ENCODE measurements at regions of chr4 and their contacts with region 1.

Region 1: DNA sequence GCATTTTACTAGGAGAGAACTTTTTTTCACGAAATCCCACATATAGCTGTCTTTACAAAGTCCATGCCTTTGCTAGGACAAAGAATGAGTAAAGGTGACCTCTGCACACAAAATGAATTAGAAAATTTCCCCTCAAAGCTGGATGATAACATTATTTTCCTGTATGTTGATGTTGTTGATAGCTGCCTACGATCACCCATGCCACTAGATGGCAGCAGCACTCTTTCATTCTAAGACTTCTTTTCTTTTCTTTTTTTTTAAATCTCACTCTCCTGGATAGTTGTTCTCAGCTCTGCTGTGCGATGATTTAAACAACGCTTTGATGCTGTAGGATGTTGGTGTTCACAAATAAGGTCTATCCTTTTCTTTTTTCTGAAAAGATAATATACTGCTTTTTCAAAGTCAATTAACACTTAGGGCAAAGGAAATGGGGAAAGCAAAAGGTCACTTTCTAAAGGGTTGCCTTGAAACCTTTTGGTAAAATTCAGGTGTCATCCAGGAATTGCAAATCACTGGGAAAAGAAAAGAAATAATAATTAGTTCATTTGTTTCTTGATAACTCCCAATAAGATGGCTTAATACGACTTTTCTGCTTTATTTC is 266.8 kb downstream of the C4orf33 start:
- DNase-seq: peak in 1 of 2 experiments; percentile 44
- H3K4me3 ChIP-seq: no peak overlapping the region
- H3K27ac ChIP-seq: no peak overlapping the region
- H3K4me1 ChIP-seq: peaks cover 14% of the 10 kb centered on the region
- H3K27me3 ChIP-seq: no peaks in the 10 kb centered on the region
- CTCF ChIP-seq: peak; percentile 80

Region 2: DNA sequence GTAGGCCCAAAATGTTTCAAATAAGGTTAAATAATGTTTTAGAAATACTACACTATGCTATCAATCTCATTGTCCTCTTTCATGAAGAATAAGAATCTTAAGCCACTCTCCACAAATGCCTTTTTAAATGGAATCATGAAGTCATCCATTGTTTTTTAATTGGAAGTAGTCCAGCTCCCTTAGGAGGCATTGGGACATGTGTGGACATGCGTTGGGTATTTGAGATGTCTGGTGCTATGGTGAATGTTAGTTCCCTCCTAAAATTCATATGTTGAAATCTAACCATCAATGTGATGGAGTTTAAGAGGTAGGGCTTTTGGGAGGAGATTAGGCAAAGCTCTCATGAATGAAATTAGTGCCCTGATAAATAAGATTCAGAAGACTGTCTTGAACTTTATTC is 22.2 kb after region 1 on chr4:
- CTCF ChIA-PET with region 1: no interaction called
- POLR2A ChIA-PET with region 1: no interaction called
- intact Hi-C with region 1: no loop called
- DNase-seq: no peak
- H3K4me3 ChIP-seq: no peak overlapping the region
- H3K27ac ChIP-seq: no peak overlapping the region
- H3K4me1 ChIP-seq: no peaks in the 10 kb centered on the region
- H3K27me3 ChIP-seq: no peaks in the 10 kb centered on the region
- CTCF ChIP-seq: no peak

Region 3: GRCh38 chr4:129403848-129404247 is 41.1 kb after region 1 on chr4:
- CTCF ChIA-PET with region 1: no interaction called
- POLR2A ChIA-PET with region 1: no interaction called
- intact Hi-C with region 1: no loop called
- DNase-seq: no peak
- H3K4me3 ChIP-seq: no peak overlapping the region
- H3K27ac ChIP-seq: no peak overlapping the region
- H3K4me1 ChIP-seq: no peaks in the 10 kb centered on the region
- H3K27me3 ChIP-seq: no peaks in the 10 kb centered on the region
- CTCF ChIP-seq: no peak

Region 4: GRCh38 chr4:129641179-129641578 is 278.4 kb after region 1 on chr4:
- CTCF ChIA-PET with region 1: no interaction called
- POLR2A ChIA-PET with region 1: no interaction called
- intact Hi-C with region 1: loop called (anchors 5 kb)
- DNase-seq: peak in 1 of 2 experiments; percentile 29
- H3K4me3 ChIP-seq: no peak overlapping the region
- H3K27ac ChIP-seq: no peak overlapping the region
- H3K4me1 ChIP-seq: no peaks in the 10 kb centered on the region
- H3K27me3 ChIP-seq: no peaks in the 10 kb centered on the region
- CTCF ChIP-seq: peak; percentile 77

Region 5: DNA sequence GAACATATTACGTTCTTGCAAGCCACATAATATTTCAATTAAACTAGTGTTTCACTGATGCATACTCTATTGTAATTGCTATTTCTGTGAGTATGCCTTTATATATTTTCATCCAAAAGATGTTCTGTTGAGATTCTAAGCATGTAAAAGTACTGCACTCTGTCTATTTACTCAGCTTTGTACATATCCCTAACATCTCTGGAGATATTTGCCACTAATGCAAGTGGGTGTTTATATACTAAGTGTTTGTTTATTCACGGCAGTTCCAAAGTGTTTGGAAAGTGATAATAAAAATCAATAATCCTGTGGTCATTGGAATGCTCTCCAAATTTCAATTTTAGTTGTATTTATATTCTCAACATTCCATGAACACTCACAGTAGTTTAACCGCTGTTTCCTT is 1722.2 kb after region 1 on chr4:
- CTCF ChIA-PET with region 1: no interaction called
- POLR2A ChIA-PET with region 1: no interaction called
- intact Hi-C with region 1: loop called (anchors 10 kb)
- DNase-seq: no peak
- H3K4me3 ChIP-seq: no peak overlapping the region
- H3K27ac ChIP-seq: no peak overlapping the region
- H3K4me1 ChIP-seq: no peaks in the 10 kb centered on the region
- H3K27me3 ChIP-seq: no peaks in the 10 kb centered on the region
- CTCF ChIP-seq: no peak